ENCODE measurements at regions of chr11 and their contacts with region 1.

Region 1: DNA sequence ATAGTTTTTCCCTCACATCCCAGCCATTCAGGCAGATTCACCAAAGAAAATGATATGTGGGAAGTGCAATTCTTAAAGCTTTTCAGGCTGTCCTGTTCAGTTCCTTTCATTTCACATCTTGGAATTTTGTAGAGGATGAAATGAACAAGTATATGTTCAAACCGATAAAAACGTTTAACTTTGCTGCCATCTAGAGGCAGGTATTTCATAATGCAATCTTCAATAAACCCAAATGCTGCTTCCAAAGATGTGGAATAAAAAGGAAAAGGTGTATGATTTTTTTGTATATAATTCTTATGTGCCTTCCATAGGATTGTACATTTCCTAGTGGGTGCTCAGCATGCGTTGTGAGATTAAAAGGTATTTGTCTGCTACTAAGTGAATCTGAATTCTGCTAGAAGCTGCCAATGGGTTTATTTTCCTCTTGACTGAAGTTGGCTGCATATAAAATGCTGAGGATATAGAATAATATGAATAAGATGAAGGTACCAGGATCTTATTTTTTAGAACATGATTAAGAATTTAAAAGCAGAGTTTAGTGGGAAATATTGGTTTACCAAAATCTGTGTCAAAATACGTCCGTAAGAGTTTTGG is 199.3 kb downstream of the PGR start:
- DNase-seq: no peak
- H3K4me3 ChIP-seq: no peak overlapping the region
- H3K27ac ChIP-seq: no peak overlapping the region
- H3K4me1 ChIP-seq: peaks cover 0 to 11% (median 0%) of the 10 kb centered on the region in 6 donors
- H3K27me3 ChIP-seq: no peaks in the 10 kb centered on the region
- CTCF ChIP-seq: peak in 9 of 11 experiments; percentile 27 to 70 (median 61)
- POLR2A ChIP-seq: no peak

Region 2: DNA sequence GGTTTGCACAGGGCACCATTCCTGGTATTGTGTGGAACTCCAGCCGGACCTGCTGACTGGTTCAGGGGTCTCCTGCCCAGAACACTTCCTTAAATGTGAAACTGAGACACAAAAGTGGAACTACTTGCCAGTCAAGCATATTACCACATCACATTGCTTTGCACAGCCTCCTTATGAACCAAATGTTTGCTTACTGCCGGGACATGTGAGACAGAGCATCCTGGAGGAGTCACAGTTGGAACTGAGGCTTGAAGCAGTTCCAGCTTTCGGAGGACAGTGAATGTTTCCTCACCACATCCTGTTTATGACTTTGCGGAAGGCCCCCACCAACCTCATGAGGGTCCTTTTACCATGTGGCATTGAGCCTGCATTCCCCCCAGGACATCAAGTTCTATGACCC is 349.0 kb before region 1 on chr11:
- intact Hi-C with region 1: loop called (anchors 5 kb)
- DNase-seq: no peak
- H3K4me3 ChIP-seq: no peak overlapping the region
- H3K27ac ChIP-seq: peak overlapping the region in 3 of 8 donors; percentile 8 to 51 (median 19)
- H3K4me1 ChIP-seq: peaks cover 0 to 15% (median 5%) of the 10 kb centered on the region in 6 donors
- H3K27me3 ChIP-seq: no peaks in the 10 kb centered on the region
- CTCF ChIP-seq: no peak
- POLR2A ChIP-seq: no peak

Measured in spleen (tissue), 13 donors.